GM12878 (cell line): ENCODE measurements at regions of chr14 and their contacts with region 1.

Region 1: DNA sequence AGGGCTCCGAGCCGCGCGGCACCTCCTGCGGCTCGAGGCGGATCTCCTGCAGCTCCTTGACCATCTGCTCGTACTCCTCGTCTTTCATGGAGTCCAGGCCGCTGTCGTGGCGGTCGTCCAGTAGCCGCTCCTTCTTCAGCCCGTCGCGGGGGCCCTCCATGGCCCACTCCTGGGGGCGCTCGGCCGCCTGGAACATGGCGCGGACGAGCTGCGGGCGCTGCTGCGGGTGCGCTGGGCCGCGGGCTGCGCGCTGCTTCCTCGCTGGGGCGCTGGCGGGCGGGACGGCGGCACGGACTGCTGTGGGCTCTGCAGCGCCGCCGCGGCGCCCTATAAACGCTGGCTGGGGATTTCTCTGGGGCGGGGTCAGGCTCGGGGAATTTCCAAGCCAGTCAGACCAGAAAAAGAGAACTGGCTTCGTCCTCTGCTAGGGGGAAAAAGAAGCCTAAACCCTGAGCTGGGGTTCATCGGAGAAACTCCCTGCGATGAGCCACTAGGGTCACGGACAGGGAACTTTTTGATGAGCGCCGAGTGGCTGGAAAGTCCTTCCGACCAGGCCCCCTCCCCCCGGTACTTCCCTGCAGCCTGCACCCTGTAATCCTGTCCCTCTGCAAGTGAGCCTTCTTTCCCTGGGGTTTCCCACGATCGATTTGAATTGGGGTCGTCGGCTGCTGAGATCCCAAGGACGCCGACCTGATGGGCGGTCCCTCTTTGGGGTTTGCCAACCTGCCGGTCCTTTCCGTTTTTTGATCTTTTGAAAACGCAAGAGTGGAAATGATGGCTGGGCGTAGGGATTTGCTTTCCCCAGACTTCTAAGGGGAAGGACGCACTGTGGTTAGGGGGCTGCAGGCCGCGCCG is at the start of gene NFKBIA:
- DNase-seq: peak; percentile 86
- ATAC-seq: peak; percentile 63
- H3K4me3 ChIP-seq: peak within 1 kb of the TSS; percentile 98
- H3K27ac ChIP-seq: peak within 1 kb of the TSS; percentile 89
- H3K4me1 ChIP-seq: peaks cover 14% of the 10 kb centered on the region
- H3K27me3 ChIP-seq: no peaks in the 10 kb centered on the region
- CTCF ChIP-seq: peak; percentile 35 to 39 (median 39); a peak in 3 of 6 replicates
- EP300 ChIP-seq: peak; percentile 78 to 83; a peak in 2 of 4 replicates
- POLR2A ChIP-seq: peak; percentile 95
- RAD21 ChIP-seq: peak; percentile 25; the same call in 1 of the 2 replicates
- polyA plus RNA-seq, gene NFKBIA: 123 to 159 TPM

Region 2: GRCh38 chr14:34331728-34332623 is 1072.7 kb before region 1 on chr14:
- CTCF ChIA-PET with region 1: no interaction called
- POLR2A ChIA-PET with region 1: no interaction called
- RAD21 ChIA-PET with region 1: no interaction called
- SMC1A ChIA-PET with region 1: interaction called, 3 read pairs
- in situ Hi-C with region 1: loop called (anchors 25 kb)
- intact Hi-C with region 1: no loop called
- DNase-seq: peak; percentile 80
- ATAC-seq: peak; percentile 98
- H3K4me3 ChIP-seq: peak overlapping the region; percentile 12; the same call in 1 of the 2 replicates
- H3K27ac ChIP-seq: peak overlapping the region; percentile 90
- H3K4me1 ChIP-seq: peaks cover 15% of the 10 kb centered on the region
- H3K27me3 ChIP-seq: no peaks in the 10 kb centered on the region
- CTCF ChIP-seq: peak; percentile 76 to 86 (median 84)
- EP300 ChIP-seq: no peak
- POLR2A ChIP-seq: 0 out of 2 replicates have a peak, but pooled peaks have one; percentile 14
- RAD21 ChIP-seq: peak; percentile 84

Region 3: DNA sequence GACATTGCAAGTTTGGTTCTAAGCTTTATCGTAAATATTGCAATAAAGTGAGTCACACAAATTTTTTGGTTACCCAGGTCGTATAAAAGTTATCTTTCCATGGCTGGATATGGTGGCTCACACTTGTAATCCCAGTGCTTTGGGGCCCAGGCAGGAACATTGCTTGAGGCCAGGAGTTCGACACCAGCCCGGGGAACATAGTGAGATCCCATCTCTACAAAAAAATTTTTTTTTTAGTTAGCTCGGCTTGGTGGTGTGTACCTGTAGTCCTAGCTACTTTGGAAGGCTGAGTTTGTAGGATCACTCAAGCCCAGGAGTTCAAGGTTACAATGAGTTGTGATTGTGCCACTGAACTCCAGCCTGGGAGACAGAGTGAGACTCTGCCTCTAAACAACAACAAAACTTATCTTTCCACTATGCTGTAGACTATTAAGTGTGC is 257.9 kb before region 1 on chr14:
- CTCF ChIA-PET with region 1: interaction called, 324 read pairs
- POLR2A ChIA-PET with region 1: interaction called, 4 read pairs
- RAD21 ChIA-PET with region 1: interaction called, 257 read pairs
- SMC1A ChIA-PET with region 1: interaction called, 362 read pairs
- in situ Hi-C with region 1: loop called (anchors 5 kb)
- intact Hi-C with region 1: no loop called
- DNase-seq: no peak
- ATAC-seq: no peak
- H3K4me3 ChIP-seq: no peak overlapping the region
- H3K27ac ChIP-seq: no peak overlapping the region
- H3K4me1 ChIP-seq: peaks cover 10% of the 10 kb centered on the region
- H3K27me3 ChIP-seq: no peaks in the 10 kb centered on the region
- CTCF ChIP-seq: no peak
- EP300 ChIP-seq: no peak
- POLR2A ChIP-seq: no peak
- RAD21 ChIP-seq: no peak

Region 4: DNA sequence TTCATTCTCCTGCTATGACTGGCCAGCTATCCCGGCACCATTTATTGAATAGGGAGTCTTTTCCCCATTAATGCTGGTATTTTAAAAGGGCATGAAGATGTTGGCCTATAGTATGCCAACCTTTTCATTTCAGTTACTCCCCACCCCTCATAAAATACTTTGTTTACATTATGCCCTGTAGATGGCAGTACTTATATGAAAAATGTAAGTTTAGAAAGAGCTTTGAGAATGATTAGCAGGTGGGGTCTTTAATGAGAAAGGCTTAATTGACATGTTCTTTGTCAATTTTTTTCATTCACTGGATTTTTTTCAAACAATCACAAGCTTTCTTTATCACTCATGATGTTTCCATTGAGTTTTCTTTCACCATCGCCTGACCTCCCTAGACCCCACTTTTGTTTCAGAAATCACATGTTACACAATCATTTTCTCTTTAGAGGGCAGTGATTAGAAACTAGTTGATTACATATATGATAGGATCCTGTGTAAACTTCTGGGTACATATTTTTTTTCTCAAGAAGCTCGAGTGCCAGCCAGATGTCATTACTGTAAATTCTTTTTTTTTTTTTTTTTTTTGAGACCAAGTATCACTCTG is 175.1 kb before region 1 on chr14:
- CTCF ChIA-PET with region 1: interaction called, 438 read pairs
- POLR2A ChIA-PET with region 1: interaction called, 4 read pairs
- RAD21 ChIA-PET with region 1: interaction called, 74 read pairs
- SMC1A ChIA-PET with region 1: interaction called, 80 read pairs
- in situ Hi-C with region 1: loop called (anchors 5 kb)
- intact Hi-C with region 1: loop called (anchors 2 kb)
- DNase-seq: no peak
- ATAC-seq: peak; percentile 79
- H3K4me3 ChIP-seq: no peak overlapping the region
- H3K27ac ChIP-seq: no peak overlapping the region
- H3K4me1 ChIP-seq: peaks cover 5% of the 10 kb centered on the region; the same call in 1 of the 2 replicates
- H3K27me3 ChIP-seq: no peaks in the 10 kb centered on the region
- CTCF ChIP-seq: peak; percentile 33 to 47 (median 40); a peak in 5 of 6 replicates
- EP300 ChIP-seq: no peak
- POLR2A ChIP-seq: no peak
- RAD21 ChIP-seq: peak; percentile 65

Region 5: GRCh38 chr14:35292051-35292769 is 112.5 kb before region 1 on chr14 and contains the start of gene PSMA6:
- CTCF ChIA-PET with region 1: interaction called, 42 read pairs
- POLR2A ChIA-PET with region 1: interaction called, 93 read pairs
- RAD21 ChIA-PET with region 1: interaction called, 96 read pairs
- SMC1A ChIA-PET with region 1: interaction called, 74 read pairs
- in situ Hi-C with region 1: loop called (anchors 10 kb)
- intact Hi-C with region 1: no loop called
- DNase-seq: peak; percentile 98
- ATAC-seq: peak; percentile 90
- H3K4me3 ChIP-seq: peak within 1 kb of the TSS; percentile 86
- H3K27ac ChIP-seq: peak within 1 kb of the TSS; percentile 80
- H3K4me1 ChIP-seq: peaks cover 18% of the 10 kb centered on the region
- H3K27me3 ChIP-seq: no peaks in the 10 kb centered on the region
- CTCF ChIP-seq: no peak
- EP300 ChIP-seq: 0 out of 4 replicates have a peak, but pooled peaks have one; percentile 20 to 36
- POLR2A ChIP-seq: peak; percentile 83
- RAD21 ChIP-seq: no peak
- polyA plus RNA-seq, gene PSMA6: 1,136 to 1,363 TPM

Region 6: GRCh38 chr14:35365130-35366055 is 39.3 kb before region 1 on chr14:
- CTCF ChIA-PET with region 1: interaction called, 8 read pairs
- POLR2A ChIA-PET with region 1: interaction called, 9 read pairs
- RAD21 ChIA-PET with region 1: interaction called, 32 read pairs
- SMC1A ChIA-PET with region 1: interaction called, 6 read pairs
- in situ Hi-C with region 1: no loop called
- intact Hi-C with region 1: no loop called
- DNase-seq: no peak
- ATAC-seq: peak; percentile 72
- H3K4me3 ChIP-seq: no peak overlapping the region
- H3K27ac ChIP-seq: no peak overlapping the region
- H3K4me1 ChIP-seq: peaks cover 43% of the 10 kb centered on the region
- H3K27me3 ChIP-seq: no peaks in the 10 kb centered on the region
- CTCF ChIP-seq: no peak
- EP300 ChIP-seq: no peak
- POLR2A ChIP-seq: no peak
- RAD21 ChIP-seq: no peak

Region 7: GRCh38 chr14:35456261-35456660 is 51.6 kb after region 1 on chr14:
- CTCF ChIA-PET with region 1: no interaction called
- POLR2A ChIA-PET with region 1: no interaction called
- RAD21 ChIA-PET with region 1: no interaction called
- SMC1A ChIA-PET with region 1: no interaction called
- in situ Hi-C with region 1: no loop called
- intact Hi-C with region 1: no loop called
- DNase-seq: no peak
- ATAC-seq: no peak
- H3K4me3 ChIP-seq: no peak overlapping the region
- H3K27ac ChIP-seq: no peak overlapping the region
- H3K4me1 ChIP-seq: no peaks in the 10 kb centered on the region
- H3K27me3 ChIP-seq: no peaks in the 10 kb centered on the region
- CTCF ChIP-seq: no peak
- EP300 ChIP-seq: no peak
- POLR2A ChIP-seq: no peak
- RAD21 ChIP-seq: no peak